SK-N-SH (cell line): ENCODE measurements at regions of chr10 and their contacts with region 1.

Region 1: DNA sequence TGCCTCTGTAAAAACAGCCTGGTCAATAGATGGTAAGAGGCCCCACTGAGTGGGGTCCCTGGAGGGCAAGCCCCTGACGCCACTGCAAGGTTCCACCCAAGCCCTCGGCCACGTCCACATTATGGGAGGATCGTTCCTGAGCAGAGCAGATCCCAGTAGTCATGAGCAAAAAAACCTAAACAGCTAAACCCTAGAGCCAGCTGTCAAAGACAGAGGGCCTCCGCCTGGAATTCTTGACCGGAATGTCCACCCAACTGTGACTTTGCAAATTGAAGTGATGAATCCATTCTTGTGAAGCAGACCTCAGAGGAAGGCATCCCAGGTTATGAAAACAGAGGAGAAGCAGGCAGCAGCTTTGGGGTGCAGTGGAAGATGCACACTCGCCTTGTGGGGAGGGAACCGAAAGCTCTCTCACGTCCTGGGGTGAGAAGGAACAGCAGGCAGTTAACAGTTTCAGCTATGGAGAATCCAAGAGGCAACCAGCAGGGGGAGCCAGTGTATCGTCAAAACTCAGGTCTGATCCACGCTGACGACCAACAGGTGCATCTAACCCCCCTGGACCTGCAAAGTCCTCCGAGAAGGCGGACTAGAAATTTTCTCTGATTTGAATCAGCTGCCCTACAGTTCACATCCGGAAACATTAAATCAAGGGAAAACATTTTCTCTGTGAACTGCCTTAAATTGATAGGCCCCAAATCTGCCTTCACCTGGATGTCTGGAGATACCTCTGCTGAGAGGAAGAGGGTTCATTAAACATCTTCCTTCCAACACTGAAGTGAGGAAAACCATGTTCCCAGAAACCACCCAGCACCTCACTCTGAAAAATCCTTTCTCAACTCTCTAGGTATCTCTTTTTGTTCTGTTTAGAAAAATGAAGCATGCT is 139.1 kb upstream of the PFKP start:
- DNase-seq: peak; percentile 84
- H3K4me3 ChIP-seq: peak overlapping the region in 1 of 2 experiments; percentile 28; a peak in 1 of 4 replicates
- H3K27ac ChIP-seq: no peak overlapping the region
- H3K4me1 ChIP-seq: peaks cover 13 to 26% of the 10 kb centered on the region in 2 experiments; a peak in 3 of 4 replicates
- H3K27me3 ChIP-seq: no peaks in the 10 kb centered on the region
- CTCF ChIP-seq: peak; percentile 79
- EP300 ChIP-seq: no peak
- RAD21 ChIP-seq: peak; percentile 88

Region 2: DNA sequence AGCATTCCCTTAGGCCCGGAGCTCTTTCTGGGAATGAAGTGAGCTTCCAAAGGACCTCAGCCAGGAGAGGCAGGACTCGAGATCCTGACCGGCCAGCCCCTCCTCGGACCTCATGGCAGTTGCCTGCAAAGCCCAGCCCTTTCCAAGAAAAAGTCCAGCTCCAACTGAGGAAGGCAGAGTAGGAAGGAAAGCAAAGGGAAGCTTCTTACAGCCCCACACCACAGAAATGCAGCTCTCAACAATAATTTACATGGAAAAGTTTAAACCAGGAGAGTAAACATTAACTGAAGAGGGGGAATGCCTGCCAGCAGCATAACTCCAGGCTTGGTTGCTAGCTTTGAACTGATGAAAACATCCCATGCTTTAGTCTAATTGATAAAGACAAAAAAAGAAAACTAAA is 14.7 kb before region 1 on chr10:
- CTCF ChIA-PET with region 1: interaction called, 18 read pairs
- POLR2A ChIA-PET with region 1: interaction called, 3 read pairs
- DNase-seq: no peak
- H3K4me3 ChIP-seq: no peak overlapping the region
- H3K27ac ChIP-seq: no peak overlapping the region
- H3K4me1 ChIP-seq: no peaks in the 10 kb centered on the region
- H3K27me3 ChIP-seq: no peaks in the 10 kb centered on the region; the same call in 1 of the 2 replicates
- CTCF ChIP-seq: no peak
- EP300 ChIP-seq: no peak
- RAD21 ChIP-seq: no peak

Region 3: DNA sequence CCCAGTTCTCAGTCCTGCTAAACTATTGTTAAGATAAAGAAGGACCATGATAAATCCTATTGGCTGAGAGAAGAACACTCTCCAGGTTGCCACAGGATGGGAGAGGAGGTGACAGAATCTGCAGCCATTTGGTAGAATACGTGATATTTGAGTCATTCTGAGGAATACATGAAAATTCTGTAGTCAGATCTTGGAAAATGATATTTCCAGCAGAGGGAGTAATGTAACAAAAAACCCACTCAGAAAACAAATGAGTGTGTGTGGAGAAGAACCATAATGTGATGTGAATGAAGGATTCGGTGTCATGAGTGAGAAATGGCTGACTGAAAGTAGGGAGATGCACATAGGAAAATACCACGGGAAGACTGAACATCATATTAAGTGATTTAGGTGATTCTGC is 10.7 kb after region 1 on chr10:
- CTCF ChIA-PET with region 1: interaction called, 16 read pairs
- POLR2A ChIA-PET with region 1: no interaction called
- DNase-seq: no peak
- H3K4me3 ChIP-seq: no peak overlapping the region
- H3K27ac ChIP-seq: no peak overlapping the region
- H3K4me1 ChIP-seq: peaks cover 4% of the 10 kb centered on the region in 2 experiments; a peak in 1 of 4 replicates
- H3K27me3 ChIP-seq: peaks cover 6% of the 10 kb centered on the region; the same call in 1 of the 2 replicates
- CTCF ChIP-seq: peak; percentile 43
- EP300 ChIP-seq: no peak
- RAD21 ChIP-seq: peak; percentile 43

Region 4: DNA sequence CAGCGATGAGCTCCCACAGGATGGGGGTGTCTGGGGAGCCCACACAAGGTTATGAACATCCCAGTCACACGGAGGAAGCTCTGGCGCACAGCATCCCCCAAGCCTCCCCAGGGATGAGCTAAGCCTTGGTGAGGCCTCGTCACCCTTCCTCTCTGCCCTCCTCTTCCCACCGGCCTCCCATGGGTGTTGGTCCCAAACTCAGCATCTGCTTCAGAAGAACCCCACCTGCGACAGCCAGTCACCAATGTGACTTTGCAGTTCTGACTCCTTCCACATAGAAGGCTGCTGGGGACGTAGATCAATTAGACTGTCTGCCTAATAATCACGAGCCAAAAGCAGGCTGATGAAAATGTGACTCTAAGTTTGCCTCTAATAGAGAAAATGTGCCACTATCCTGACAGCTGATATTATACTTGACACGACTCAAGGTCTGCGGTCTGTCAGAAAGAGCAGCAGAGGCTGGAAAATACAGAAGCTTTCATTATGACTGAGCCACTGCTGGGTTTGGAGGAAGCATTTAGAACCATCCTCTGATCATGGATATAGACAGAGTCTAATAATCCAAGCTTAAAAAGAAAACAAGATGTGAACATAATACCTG is 23.1 kb after region 1 on chr10:
- CTCF ChIA-PET with region 1: interaction called, 11 read pairs
- POLR2A ChIA-PET with region 1: no interaction called
- DNase-seq: no peak
- H3K4me3 ChIP-seq: no peak overlapping the region
- H3K27ac ChIP-seq: no peak overlapping the region
- H3K4me1 ChIP-seq: no peaks in the 10 kb centered on the region
- H3K27me3 ChIP-seq: no peaks in the 10 kb centered on the region; the same call in 1 of the 2 replicates
- CTCF ChIP-seq: no peak
- EP300 ChIP-seq: no peak
- RAD21 ChIP-seq: no peak

Region 5: DNA sequence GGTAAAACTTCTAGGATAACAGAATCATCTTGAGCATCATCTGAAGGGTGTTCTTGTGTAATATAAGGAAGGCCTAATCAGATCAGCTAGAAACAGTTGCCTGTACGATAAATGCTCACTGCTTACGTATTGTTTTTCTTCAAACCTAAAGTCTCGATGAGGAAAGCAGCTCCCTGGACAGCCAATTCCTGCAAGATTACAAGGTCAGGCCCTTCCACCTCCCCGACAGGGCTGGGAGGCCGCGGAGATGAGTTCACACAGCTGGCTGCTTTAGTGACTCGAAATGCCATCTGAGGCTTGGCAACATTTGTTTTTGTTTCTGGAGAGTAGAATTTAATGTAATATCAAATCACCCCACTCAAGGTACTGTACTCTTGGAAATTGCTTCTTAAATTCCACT is 44.0 kb after region 1 on chr10:
- CTCF ChIA-PET with region 1: interaction called, 17 read pairs
- POLR2A ChIA-PET with region 1: no interaction called
- DNase-seq: no peak
- H3K4me3 ChIP-seq: no peak overlapping the region
- H3K27ac ChIP-seq: no peak overlapping the region
- H3K4me1 ChIP-seq: no peaks in the 10 kb centered on the region
- H3K27me3 ChIP-seq: no peaks in the 10 kb centered on the region; the same call in 1 of the 2 replicates
- CTCF ChIP-seq: no peak
- EP300 ChIP-seq: no peak
- RAD21 ChIP-seq: no peak

Region 6: DNA sequence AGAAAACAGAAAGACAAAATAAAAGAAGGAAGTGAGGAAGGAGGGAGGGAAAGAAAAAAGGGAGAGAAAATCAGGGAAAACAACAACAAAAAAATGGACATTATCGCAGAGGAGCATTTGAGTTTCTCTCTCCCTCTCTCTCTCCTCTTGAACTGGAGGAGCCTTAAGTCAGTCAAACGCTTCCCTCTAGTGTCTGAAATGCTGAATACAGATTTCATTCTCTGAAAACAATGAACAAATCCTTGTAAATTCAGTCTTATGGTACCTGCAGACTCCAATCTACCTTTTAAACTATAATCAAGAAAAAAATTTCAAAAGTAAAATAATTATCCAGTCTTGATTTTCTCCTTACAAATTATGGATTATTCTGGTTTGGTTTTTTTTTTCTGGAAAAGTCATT is 49.9 kb after region 1 on chr10:
- CTCF ChIA-PET with region 1: interaction called, 17 read pairs
- POLR2A ChIA-PET with region 1: no interaction called
- DNase-seq: peak; percentile 64
- H3K4me3 ChIP-seq: no peak overlapping the region
- H3K27ac ChIP-seq: no peak overlapping the region
- H3K4me1 ChIP-seq: peaks cover 0 to 13% of the 10 kb centered on the region in 2 experiments; a peak in 1 of 4 replicates
- H3K27me3 ChIP-seq: no peaks in the 10 kb centered on the region
- CTCF ChIP-seq: peak; percentile 73
- EP300 ChIP-seq: no peak
- RAD21 ChIP-seq: peak; percentile 91

Region 7: GRCh38 chr10:3043512-3044368 is 115.5 kb after region 1 on chr10:
- CTCF ChIA-PET with region 1: interaction called, 83 read pairs
- POLR2A ChIA-PET with region 1: interaction called, 3 read pairs
- DNase-seq: peak; percentile 83
- H3K4me3 ChIP-seq: peak overlapping the region in 1 of 2 experiments; percentile 49; a peak in 1 of 4 replicates
- H3K27ac ChIP-seq: peak overlapping the region in 1 of 2 experiments; percentile 51; a peak in 2 of 4 replicates
- H3K4me1 ChIP-seq: peaks cover 11 to 35% of the 10 kb centered on the region in 2 experiments; a peak in 3 of 4 replicates
- H3K27me3 ChIP-seq: no peaks in the 10 kb centered on the region
- CTCF ChIP-seq: peak; percentile 97
- EP300 ChIP-seq: no peak
- RAD21 ChIP-seq: peak; percentile 95